ENCODE measurements at regions of chr15 and their contacts with region 1.

Region 1: GRCh38 chr15:90071208-90071807 is 31.0 kb downstream of the IDH2 start:
- DNase-seq: peak; percentile 77 to 85
- H3K4me3 ChIP-seq: no peak overlapping the region
- H3K27ac ChIP-seq: peak overlapping the region in 1 of 2 donors; percentile 14
- H3K4me1 ChIP-seq: no peaks in the 10 kb centered on the region
- H3K27me3 ChIP-seq: no peaks in the 10 kb centered on the region
- CTCF ChIP-seq: peak; percentile 63 to 83 (median 76)
- POLR2A ChIP-seq: no peak

Region 2: GRCh38 chr15:89893696-89894455 is 177.4 kb before region 1 on chr15 and contains the start of gene AP3S2:
- intact Hi-C with region 1: loop called (anchors 10 kb)
- DNase-seq: peak; percentile 88 to 90
- H3K4me3 ChIP-seq: peak within 1 kb of the TSS; percentile 79 to 86
- H3K27ac ChIP-seq: peak within 1 kb of the TSS; percentile 90 to 92
- H3K4me1 ChIP-seq: peaks cover 0 to 8% of the 10 kb centered on the region in 2 donors
- H3K27me3 ChIP-seq: no peaks in the 10 kb centered on the region
- CTCF ChIP-seq: peak in 1 of 4 experiments; percentile 23
- POLR2A ChIP-seq: peak; percentile 54 to 66
- total RNA-seq, gene AP3S2: 17.4 to 70.6 (median 35.9) TPM

Region 3: DNA sequence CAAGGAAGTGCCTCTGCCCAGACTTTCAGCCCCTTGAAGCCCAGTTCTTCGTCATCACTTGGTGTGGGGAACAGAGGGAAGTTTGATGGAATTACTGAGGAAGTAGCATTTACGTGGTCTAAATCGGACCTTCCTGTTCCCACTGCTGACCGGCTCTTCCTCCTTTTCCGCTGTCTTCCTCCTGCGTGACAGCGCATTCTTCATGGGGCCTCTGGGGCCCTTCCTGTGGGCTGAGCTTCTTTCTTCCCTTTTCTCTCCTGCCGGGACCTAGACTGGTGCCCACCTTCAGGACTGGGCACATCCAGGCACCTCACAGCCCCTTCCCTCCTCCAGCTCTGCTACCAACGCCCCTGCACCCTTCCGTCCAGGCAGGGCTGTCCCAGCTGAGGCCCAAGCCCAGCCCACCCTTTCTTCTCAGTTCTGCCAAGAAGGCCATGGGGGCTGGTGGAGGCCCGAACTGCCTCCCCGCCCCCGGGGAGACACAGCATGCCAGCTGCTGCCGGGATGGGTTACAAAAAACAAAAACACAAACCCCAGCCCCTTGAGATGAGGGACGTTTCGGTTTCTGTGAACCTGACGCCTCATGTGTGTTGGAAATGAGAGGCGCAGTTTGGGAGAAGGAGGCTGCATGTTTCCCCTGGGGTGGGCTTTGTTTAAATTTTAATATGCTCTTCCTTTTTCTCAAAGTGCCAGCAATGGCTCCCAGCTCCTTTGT is 51.1 kb before region 1 on chr15:
- intact Hi-C with region 1: no loop called
- DNase-seq: no peak
- H3K4me3 ChIP-seq: no peak overlapping the region
- H3K27ac ChIP-seq: peak overlapping the region in 1 of 2 donors; percentile 39
- H3K4me1 ChIP-seq: no peaks in the 10 kb centered on the region
- H3K27me3 ChIP-seq: no peaks in the 10 kb centered on the region
- CTCF ChIP-seq: no peak
- POLR2A ChIP-seq: no peak

Region 4: GRCh38 chr15:90191794-90192509 is 120.6 kb after region 1 on chr15:
- intact Hi-C with region 1: no loop called
- DNase-seq: peak; percentile 57 to 64
- H3K4me3 ChIP-seq: no peak overlapping the region
- H3K27ac ChIP-seq: peak overlapping the region; percentile 26 to 77
- H3K4me1 ChIP-seq: no peaks in the 10 kb centered on the region
- H3K27me3 ChIP-seq: no peaks in the 10 kb centered on the region
- CTCF ChIP-seq: no peak
- POLR2A ChIP-seq: no peak

Measured in uterus (tissue), 4 donors.